ENCODE measurements at regions of chr6 and their contacts with region 1.

Region 1: DNA sequence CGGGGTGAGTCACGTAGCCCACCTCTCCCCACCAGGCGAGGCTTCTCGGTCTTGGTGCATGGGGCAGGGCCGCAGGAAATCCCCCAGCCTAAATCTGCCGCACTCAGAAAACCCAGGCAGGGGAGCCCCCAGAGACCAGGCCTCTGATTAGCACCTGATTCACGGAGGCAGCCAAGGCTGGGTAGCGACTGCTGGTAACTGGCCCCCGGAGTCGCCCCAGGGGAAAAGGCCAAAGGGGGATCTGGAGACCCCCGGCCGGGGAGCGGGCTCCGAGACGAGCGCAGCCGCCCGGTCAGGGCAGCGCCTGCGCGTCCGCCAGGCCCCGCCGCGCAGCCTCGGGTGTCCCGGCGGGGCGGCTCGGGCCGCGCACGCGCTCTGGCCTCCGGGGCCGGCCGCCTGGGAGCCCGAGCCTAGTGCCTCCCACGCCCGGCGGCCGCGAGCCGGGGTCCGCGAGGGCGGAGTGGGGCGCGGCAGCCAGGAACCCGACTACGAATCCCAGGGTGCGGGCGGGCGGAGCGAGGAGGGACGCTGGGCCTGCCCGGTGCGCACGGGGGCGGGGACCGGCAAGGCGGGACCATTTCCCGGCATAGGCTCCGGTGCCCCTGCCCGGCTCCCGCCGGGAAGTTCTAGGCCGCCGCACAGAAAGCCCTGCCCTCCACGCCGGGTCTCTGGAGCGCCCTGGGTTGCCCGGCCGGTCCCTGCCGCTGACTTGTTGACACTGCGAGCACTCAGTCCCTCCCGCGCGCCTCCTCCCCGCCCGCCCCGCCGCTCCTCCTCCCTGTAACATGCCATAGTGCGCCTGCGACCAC is at the start of gene DUSP22:
- DNase-seq: peak; percentile 52 to 95 (median 78)
- ATAC-seq: peak; percentile 74
- H3K4me3 ChIP-seq: peak within 1 kb of the TSS; percentile 63
- H3K4me3 Mint-ChIP-seq: peak within 1 kb of the TSS; percentile 85 to 97 (median 93)
- H3K27ac ChIP-seq: peak within 1 kb of the TSS; percentile 82
- H3K27ac Mint-ChIP-seq: peak within 1 kb of the TSS; percentile 86 to 98 (median 94)
- H3K4me1 ChIP-seq: peaks cover 9 to 26% of the 10 kb centered on the region in 2 donors
- H3K4me1 Mint-ChIP-seq: peaks cover 31 to 63% (median 47%) of the 10 kb centered on the region in 7 donors
- H3K27me3 ChIP-seq: no peaks in the 10 kb centered on the region
- H3K27me3 Mint-ChIP-seq: no peaks in the 10 kb centered on the region
- total RNA-seq, gene DUSP22: 24.8 to 57.2 (median 51.0) TPM

Region 2: GRCh38 chr6:225121-225721 is 66.7 kb before region 1 on chr6:
- CTCF ChIA-PET with region 1: no interaction called
- POLR2A ChIA-PET with region 1: no interaction called
- intact Hi-C with region 1: loop called (anchors 1 to 2 kb)
- DNase-seq: peak in 8 of 9 donors; percentile 2 to 73 (median 20)
- ATAC-seq: peak; percentile 79
- H3K4me3 ChIP-seq: peak overlapping the region; percentile 6
- H3K4me3 Mint-ChIP-seq: peak overlapping the region; percentile 66 to 87 (median 80)
- H3K27ac ChIP-seq: no peak overlapping the region
- H3K27ac Mint-ChIP-seq: peak overlapping the region in 8 of 9 donors; percentile 56 to 99 (median 88)
- H3K4me1 ChIP-seq: peaks cover 20 to 21% of the 10 kb centered on the region in 2 donors
- H3K4me1 Mint-ChIP-seq: peaks cover 11 to 74% (median 29%) of the 10 kb centered on the region in 7 donors
- H3K27me3 ChIP-seq: no peaks in the 10 kb centered on the region
- H3K27me3 Mint-ChIP-seq: no peaks in the 10 kb centered on the region

Region 3: GRCh38 chr6:251920-252319 is 40.0 kb before region 1 on chr6:
- CTCF ChIA-PET with region 1: no interaction called
- POLR2A ChIA-PET with region 1: no interaction called
- intact Hi-C with region 1: loop called in 1 of 2 experiments (anchors 5 kb)
- DNase-seq: no peak
- ATAC-seq: peak; percentile 32
- H3K4me3 ChIP-seq: no peak overlapping the region
- H3K4me3 Mint-ChIP-seq: peak overlapping the region in 1 of 10 donors; percentile 3
- H3K27ac ChIP-seq: no peak overlapping the region
- H3K27ac Mint-ChIP-seq: peak overlapping the region in 2 of 9 donors; percentile 44 to 77
- H3K4me1 ChIP-seq: peaks cover 7 to 11% of the 10 kb centered on the region in 2 donors
- H3K4me1 Mint-ChIP-seq: peaks cover 19 to 36% (median 32%) of the 10 kb centered on the region in 7 donors
- H3K27me3 ChIP-seq: no peaks in the 10 kb centered on the region
- H3K27me3 Mint-ChIP-seq: no peaks in the 10 kb centered on the region

Region 4: DNA sequence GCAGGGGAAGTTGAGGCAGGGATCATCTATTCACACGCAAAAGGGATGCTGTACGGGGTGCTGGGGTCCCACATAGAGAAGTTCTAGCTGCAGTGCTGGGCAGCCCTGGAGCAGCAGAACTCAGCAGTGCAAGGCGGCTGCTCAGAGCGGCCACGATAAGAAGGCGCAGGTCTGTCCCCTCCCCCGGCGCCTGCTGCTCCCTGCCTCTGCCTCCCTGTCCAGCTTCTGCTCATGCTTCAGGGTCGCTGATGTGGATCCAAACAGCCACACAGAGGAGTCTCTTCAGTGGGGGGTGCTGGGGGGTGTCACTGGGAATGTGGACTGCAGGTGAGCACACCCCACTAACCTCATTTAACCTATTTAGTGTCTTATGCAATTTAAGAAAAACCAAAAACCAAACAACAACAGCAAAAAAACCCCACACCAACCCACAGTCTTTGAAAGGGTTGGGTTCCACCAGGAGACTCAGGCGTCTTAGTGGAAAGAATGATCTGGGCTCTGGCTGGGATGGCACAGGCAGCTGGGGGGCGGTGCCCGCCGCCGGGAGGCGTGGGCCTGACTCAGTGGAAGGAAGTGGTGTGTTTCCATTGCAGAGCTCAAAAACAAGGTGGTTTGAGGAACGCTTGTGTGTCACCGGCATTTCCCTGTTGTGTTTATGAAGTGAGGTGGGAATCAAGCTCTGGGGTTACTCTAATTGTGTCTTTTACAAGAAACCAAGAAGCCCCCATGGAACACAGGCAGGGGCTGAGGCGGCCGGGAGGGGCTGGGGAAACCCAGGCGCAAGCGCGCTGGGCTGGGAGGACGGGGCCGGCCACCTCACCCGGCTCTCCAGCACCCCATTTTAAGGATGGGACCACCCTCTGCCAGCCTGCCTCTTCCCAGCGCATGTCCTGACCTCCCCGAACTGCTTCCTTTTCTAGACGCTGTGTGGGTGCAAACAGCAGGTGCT is 154.8 kb after region 1 on chr6:
- CTCF ChIA-PET with region 1: no interaction called
- POLR2A ChIA-PET with region 1: no interaction called
- intact Hi-C with region 1: loop called in 1 of 2 experiments (anchors 2 kb)
- DNase-seq: peak in 8 of 9 donors; percentile 51 to 95 (median 66)
- ATAC-seq: peak; percentile 73
- H3K4me3 ChIP-seq: peak overlapping the region; percentile 38
- H3K4me3 Mint-ChIP-seq: peak overlapping the region; percentile 34 to 76 (median 59)
- H3K27ac ChIP-seq: no peak overlapping the region
- H3K27ac Mint-ChIP-seq: peak overlapping the region; percentile 70 to 92 (median 80)
- H3K4me1 ChIP-seq: peaks cover 36 to 48% of the 10 kb centered on the region in 2 donors
- H3K4me1 Mint-ChIP-seq: peaks cover 40 to 57% (median 56%) of the 10 kb centered on the region in 7 donors
- H3K27me3 ChIP-seq: no peaks in the 10 kb centered on the region
- H3K27me3 Mint-ChIP-seq: peaks cover 0 to 2% (median 0%) of the 10 kb centered on the region in 5 donors

Region 5: GRCh38 chr6:490251-491037 is 198.5 kb after region 1 on chr6:
- CTCF ChIA-PET with region 1: no interaction called
- POLR2A ChIA-PET with region 1: no interaction called
- intact Hi-C with region 1: loop called in 1 of 2 experiments (anchors 5 kb)
- DNase-seq: no peak
- ATAC-seq: peak; percentile 47
- H3K4me3 ChIP-seq: peak overlapping the region; percentile 25
- H3K4me3 Mint-ChIP-seq: peak overlapping the region; percentile 19 to 87 (median 70)
- H3K27ac ChIP-seq: no peak overlapping the region
- H3K27ac Mint-ChIP-seq: peak overlapping the region; percentile 54 to 98 (median 84)
- H3K4me1 ChIP-seq: peaks cover 60 to 65% of the 10 kb centered on the region in 2 donors
- H3K4me1 Mint-ChIP-seq: peaks cover 46 to 78% (median 70%) of the 10 kb centered on the region in 7 donors
- H3K27me3 ChIP-seq: no peaks in the 10 kb centered on the region
- H3K27me3 Mint-ChIP-seq: no peaks in the 10 kb centered on the region

Region 6: GRCh38 chr6:710601-711571 is 419.0 kb after region 1 on chr6:
- CTCF ChIA-PET with region 1: no interaction called
- POLR2A ChIA-PET with region 1: no interaction called
- intact Hi-C with region 1: loop called in 1 of 2 experiments (anchors 2 kb)
- DNase-seq: peak; percentile 26 to 72 (median 63)
- ATAC-seq: peak; percentile 90
- H3K4me3 ChIP-seq: peak overlapping the region; percentile 69
- H3K4me3 Mint-ChIP-seq: peak overlapping the region; percentile 89 to 99 (median 98)
- H3K27ac ChIP-seq: peak overlapping the region; percentile 81
- H3K27ac Mint-ChIP-seq: peak overlapping the region; percentile 92 to 100 (median 99)
- H3K4me1 ChIP-seq: peaks cover 5 to 8% of the 10 kb centered on the region in 2 donors
- H3K4me1 Mint-ChIP-seq: peaks cover 8 to 42% (median 21%) of the 10 kb centered on the region in 7 donors
- H3K27me3 ChIP-seq: no peaks in the 10 kb centered on the region
- H3K27me3 Mint-ChIP-seq: peaks cover 0 to 13% (median 0%) of the 10 kb centered on the region in 5 donors